ENCODE measurements at regions of chr6 and their contacts with region 1.

Region 1: DNA sequence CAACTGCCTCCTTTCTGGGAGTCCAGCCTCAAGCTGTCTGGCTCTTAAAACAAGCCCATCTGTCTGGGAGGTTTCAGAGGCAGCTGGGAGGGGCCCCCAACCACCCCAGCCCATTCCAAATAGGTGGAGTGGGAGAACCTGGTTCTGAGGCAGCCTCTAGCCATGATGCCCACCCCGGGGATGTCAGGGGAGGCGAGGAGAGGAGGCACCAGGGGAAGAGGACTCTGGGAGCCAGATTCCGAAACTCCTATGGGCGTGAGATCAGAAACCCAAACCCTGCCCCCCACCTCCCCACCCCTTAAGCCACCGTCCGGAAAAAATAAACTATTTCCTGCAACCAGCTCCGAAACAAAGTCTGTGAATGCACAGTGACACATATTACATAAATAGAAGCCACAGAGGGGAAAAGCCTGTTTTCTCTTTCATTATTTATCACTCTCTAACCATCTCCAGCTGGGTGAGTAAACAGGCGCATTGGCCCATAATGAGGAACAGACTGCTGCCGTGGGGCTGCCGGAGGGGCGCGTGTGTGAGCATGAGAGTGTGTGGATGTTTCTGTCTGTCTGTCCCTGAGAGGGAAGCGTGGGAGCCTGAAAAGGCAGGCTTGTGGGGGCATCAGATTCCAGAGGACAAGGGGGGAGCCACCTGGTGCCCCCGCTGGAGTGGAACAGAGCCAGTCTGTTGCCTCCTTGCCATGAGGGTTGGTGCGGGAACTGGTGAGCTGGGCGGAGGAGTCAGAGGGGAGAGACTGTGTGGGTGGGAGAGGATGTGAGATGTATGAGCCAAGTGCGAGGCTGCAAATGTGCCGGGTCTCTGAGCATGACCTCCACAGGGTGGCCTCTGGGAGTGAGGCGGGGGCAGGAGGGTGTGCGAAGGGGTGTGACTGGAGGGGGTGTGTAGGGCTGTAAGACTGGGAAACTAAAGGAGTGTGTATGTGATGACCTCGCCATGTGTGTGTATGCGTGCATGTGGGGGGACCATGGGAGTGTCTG is 14.3 kb upstream of the FOXP4 start:
- DNase-seq: peak; percentile 87
- ATAC-seq: peak; percentile 88
- H3K4me3 Mint-ChIP-seq: peak overlapping the region; percentile 64
- H3K27ac Mint-ChIP-seq: peak overlapping the region; percentile 93
- H3K4me1 Mint-ChIP-seq: peaks cover 35% of the 10 kb centered on the region
- H3K27me3 Mint-ChIP-seq: peaks cover 15% of the 10 kb centered on the region

Region 2: GRCh38 chr6:41545703-41546474 is 14.0 kb after region 1 on chr6 and contains the start of gene FOXP4:
- CTCF ChIA-PET with region 1: interaction called, 4 read pairs
- POLR2A ChIA-PET with region 1: interaction called, 5 read pairs
- intact Hi-C with region 1: loop called (anchors 1 kb)
- DNase-seq: peak; percentile 92
- ATAC-seq: peak; percentile 84
- H3K4me3 Mint-ChIP-seq: peak within 1 kb of the TSS; percentile 84
- H3K27ac Mint-ChIP-seq: peak within 1 kb of the TSS; percentile 92
- H3K4me1 Mint-ChIP-seq: peaks cover 15% of the 10 kb centered on the region
- H3K27me3 Mint-ChIP-seq: peaks cover 6% of the 10 kb centered on the region
- total RNA-seq, gene FOXP4: 11.1 to 13.8 TPM

Region 3: DNA sequence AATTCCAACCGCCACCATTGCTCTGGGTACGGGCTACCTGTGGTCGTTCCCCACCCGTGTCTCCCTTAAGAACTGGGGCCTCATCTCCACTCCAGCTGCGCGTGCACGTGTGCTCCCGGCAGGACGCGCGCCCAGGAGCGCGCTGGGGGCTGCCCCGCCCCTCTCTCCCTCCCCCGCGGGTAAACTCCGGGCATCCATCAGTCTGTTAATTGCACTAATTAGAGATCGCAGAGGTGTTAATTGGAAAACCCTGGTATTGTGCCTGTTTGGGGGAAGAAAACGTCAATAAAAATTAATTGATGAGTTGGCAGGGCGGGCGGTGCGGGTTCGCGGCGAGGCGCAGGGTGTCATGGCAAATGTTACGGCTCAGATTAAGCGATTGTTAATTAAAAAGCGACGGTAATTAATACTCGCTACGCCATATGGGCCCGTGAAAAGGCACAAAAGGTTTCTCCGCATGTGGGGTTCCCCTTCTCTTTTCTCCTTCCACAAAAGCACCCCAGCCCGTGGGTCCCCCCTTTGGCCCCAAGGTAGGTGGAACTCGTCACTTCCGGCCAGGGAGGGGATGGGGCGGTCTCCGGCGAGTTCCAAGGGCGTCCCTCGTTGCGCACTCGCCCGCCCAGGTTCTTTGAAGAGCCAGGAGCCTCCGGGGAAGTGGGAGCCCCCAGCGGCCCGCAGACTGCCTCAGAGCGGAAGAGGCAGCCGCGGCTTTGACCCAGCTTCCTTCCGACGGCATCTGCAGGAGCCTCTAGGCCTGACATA is 28.7 kb after region 1 on chr6:
- CTCF ChIA-PET with region 1: no interaction called
- POLR2A ChIA-PET with region 1: interaction called, 3 read pairs
- intact Hi-C with region 1: loop called in 1 of 2 experiments (anchors 1 kb)
- DNase-seq: peak; percentile 90
- ATAC-seq: peak; percentile 93
- H3K4me3 Mint-ChIP-seq: peak overlapping the region; percentile 79
- H3K27ac Mint-ChIP-seq: peak overlapping the region; percentile 82
- H3K4me1 Mint-ChIP-seq: peaks cover 18% of the 10 kb centered on the region
- H3K27me3 Mint-ChIP-seq: no peaks in the 10 kb centered on the region

Region 4: GRCh38 chr6:42068872-42069523 is 537.1 kb after region 1 on chr6:
- CTCF ChIA-PET with region 1: no interaction called
- POLR2A ChIA-PET with region 1: no interaction called
- intact Hi-C with region 1: no loop called
- DNase-seq: no peak
- ATAC-seq: no peak
- H3K4me3 Mint-ChIP-seq: no peak overlapping the region
- H3K27ac Mint-ChIP-seq: no peak overlapping the region
- H3K4me1 Mint-ChIP-seq: peaks cover 3% of the 10 kb centered on the region
- H3K27me3 Mint-ChIP-seq: no peaks in the 10 kb centered on the region